HepG2 (cell line): ENCODE measurements at regions of chr13 and their contacts with region 1.

Region 1: GRCh38 chr13:95156208-95156607 is 145.0 kb downstream of the ABCC4 start:
- DNase-seq: peak; percentile 6
- ATAC-seq: no peak
- H3K4me3 ChIP-seq: no peak overlapping the region
- H3K27ac ChIP-seq: no peak overlapping the region
- H3K4me1 ChIP-seq: peaks cover 38% of the 10 kb centered on the region
- H3K27me3 ChIP-seq: no peaks in the 10 kb centered on the region
- CTCF ChIP-seq: peak; percentile 44
- EP300 ChIP-seq: no peak
- POLR2A ChIP-seq: no peak
- RAD21 ChIP-seq: no peak

Region 2: DNA sequence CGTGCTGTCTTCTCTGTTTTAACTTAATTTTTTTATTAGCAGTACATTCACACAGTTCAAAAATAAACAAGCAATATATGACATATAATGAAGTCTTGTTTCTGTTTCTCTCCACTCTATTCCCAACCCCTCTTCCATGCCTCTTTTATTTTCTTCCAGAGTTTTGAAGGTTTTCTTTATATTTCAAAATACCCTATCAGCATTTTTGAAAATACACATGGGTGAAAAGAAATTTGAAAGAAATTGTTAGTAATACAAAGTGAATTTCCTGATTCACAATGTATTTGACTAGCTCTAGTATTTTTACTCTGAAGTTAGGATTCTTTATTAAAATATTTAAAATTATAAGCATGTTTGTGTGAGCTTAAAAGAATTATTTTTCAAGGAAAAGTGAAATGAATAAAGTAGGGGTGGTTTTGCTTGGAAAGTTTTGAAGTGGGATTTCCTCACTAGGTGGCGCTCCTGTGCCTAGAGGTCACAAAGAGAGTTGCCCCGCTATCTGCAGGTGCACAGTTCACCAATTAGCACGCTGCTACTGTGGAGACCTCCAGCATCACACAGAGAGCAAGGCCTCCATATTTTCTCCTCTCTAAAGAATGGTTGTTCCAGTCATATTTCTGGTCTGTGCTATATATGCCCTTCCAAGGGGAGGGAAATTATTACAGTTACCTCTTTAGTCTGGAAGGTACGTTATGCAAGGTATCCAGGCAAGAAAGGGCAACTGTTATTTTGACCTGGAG is 481.4 kb before region 1 on chr13:
- CTCF ChIA-PET with region 1: no interaction called
- POLR2A ChIA-PET with region 1: no interaction called
- in situ Hi-C with region 1: loop called (anchors 25 kb)
- intact Hi-C with region 1: loop called (anchors 2 kb)
- DNase-seq: peak; percentile 59
- ATAC-seq: peak; percentile 93
- H3K4me3 ChIP-seq: no peak overlapping the region
- H3K27ac ChIP-seq: no peak overlapping the region
- H3K4me1 ChIP-seq: no peaks in the 10 kb centered on the region
- H3K27me3 ChIP-seq: peaks cover 0 to 5% of the 10 kb centered on the region in 2 experiments; a peak in 2 of 5 replicates
- CTCF ChIP-seq: peak; percentile 73
- EP300 ChIP-seq: no peak
- POLR2A ChIP-seq: no peak
- RAD21 ChIP-seq: peak; percentile 39; the same call in 1 of the 2 replicates

Region 3: DNA sequence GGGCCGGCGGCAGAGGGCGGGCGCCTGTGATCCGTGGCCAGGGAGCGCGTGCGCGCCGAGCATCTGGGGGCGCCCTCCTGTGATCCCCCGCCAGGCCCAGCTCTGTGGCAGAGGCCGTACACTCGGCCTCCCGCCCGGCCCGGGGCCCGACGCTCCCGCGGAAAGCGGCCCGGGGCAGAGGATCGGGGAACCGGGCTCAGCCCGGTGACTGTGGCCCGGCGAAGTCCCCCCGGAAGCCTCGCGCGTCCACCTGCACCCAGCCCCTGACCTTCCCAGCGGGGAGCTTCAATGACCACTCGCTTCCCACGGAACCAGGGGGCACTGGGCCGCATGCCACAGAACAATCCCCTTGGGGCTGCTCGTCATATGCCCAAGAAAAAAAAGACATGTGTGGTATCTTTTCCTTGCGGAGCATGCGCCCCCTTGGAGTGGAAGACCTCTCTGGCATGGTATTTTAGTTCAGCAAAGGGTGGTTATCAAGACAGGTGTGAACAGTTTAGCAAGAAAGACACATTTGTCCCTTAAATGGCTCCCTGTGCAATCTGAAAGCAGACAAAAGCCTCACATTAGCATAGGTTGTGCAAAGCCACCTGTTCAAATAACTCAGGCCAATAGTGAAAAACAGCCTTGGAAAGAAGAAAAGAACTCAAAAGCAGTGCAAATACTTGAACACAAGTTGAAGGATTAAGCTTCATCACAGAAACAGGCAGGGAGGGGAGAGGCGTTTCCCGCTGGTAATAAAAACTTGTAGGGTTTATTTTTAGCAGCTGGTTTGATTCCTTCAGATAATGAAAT is 153.0 kb before region 1 on chr13:
- CTCF ChIA-PET with region 1: no interaction called
- POLR2A ChIA-PET with region 1: no interaction called
- in situ Hi-C with region 1: loop called (anchors 5 kb)
- intact Hi-C with region 1: loop called (anchors 5 kb)
- DNase-seq: no peak
- ATAC-seq: no peak; the same call in 1 of the 3 replicates
- H3K4me3 ChIP-seq: no peak overlapping the region
- H3K27ac ChIP-seq: no peak overlapping the region
- H3K4me1 ChIP-seq: peaks cover 19% of the 10 kb centered on the region
- H3K27me3 ChIP-seq: peaks cover 2 to 4% of the 10 kb centered on the region in 2 experiments; a peak in 1 of 5 replicates
- CTCF ChIP-seq: no peak
- EP300 ChIP-seq: no peak
- POLR2A ChIP-seq: no peak
- RAD21 ChIP-seq: no peak

Region 4: DNA sequence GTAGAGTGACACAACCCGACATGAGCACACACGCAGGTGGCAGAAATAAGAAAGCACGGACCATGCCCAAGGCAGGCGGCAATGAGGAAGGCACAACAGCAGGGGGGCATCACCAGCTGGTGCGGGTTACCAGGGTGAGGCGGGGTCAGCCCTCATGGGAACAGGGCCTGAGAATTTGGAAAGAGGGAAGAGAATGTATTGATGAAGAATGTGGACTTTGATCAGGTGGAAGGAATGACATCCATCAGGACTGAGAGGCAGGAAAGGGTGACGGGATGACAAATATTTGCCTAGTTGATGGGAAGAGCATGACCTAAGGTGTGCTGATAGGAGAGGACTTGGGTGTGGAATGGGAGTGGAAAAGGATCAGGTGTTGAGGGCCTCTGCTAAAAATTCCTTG is 32.5 kb before region 1 on chr13:
- CTCF ChIA-PET with region 1: no interaction called
- POLR2A ChIA-PET with region 1: no interaction called
- in situ Hi-C with region 1: no loop called
- intact Hi-C with region 1: loop called (anchors 5 kb)
- DNase-seq: peak; percentile 97
- ATAC-seq: peak; percentile 98
- H3K4me3 ChIP-seq: no peak overlapping the region; a peak in 1 of 6 replicates
- H3K27ac ChIP-seq: peak overlapping the region; percentile 68
- H3K4me1 ChIP-seq: peaks cover 59% of the 10 kb centered on the region
- H3K27me3 ChIP-seq: no peaks in the 10 kb centered on the region
- CTCF ChIP-seq: no peak
- EP300 ChIP-seq: peak; percentile 83
- POLR2A ChIP-seq: no peak
- RAD21 ChIP-seq: no peak